AG04449 (cell line): ENCODE measurements at regions of chr17 and their contacts with region 1.

Region 1: GRCh38 chr17:19362277-19363113 is at the start of gene B9D1:
- DNase-seq: no peak
- H3K4me3 ChIP-seq: peak within 1 kb of the TSS; percentile 90
- CTCF ChIP-seq: peak; percentile 93

Region 2: GRCh38 chr17:19270689-19271611 is 91.5 kb before region 1 on chr17:
- CTCF ChIA-PET with region 1: no interaction called
- POLR2A ChIA-PET with region 1: no interaction called
- DNase-seq: no peak
- H3K4me3 ChIP-seq: no peak overlapping the region
- CTCF ChIP-seq: no peak

Region 3: GRCh38 chr17:19338031-19338990 is 24.2 kb before region 1 on chr17:
- CTCF ChIA-PET with region 1: interaction called, 15 read pairs
- POLR2A ChIA-PET with region 1: interaction called, 3 read pairs
- DNase-seq: no peak
- H3K4me3 ChIP-seq: no peak overlapping the region
- CTCF ChIP-seq: peak; percentile 50

Region 4: GRCh38 chr17:19384701-19385411 is 22.4 kb after region 1 on chr17:
- CTCF ChIA-PET with region 1: interaction called, 42 read pairs
- POLR2A ChIA-PET with region 1: interaction called, 3 read pairs
- DNase-seq: no peak
- H3K4me3 ChIP-seq: peak overlapping the region; percentile 40
- CTCF ChIP-seq: no peak

Region 5: GRCh38 chr17:19457830-19458271 is 95.4 kb after region 1 on chr17:
- CTCF ChIA-PET with region 1: interaction called, 23 read pairs
- POLR2A ChIA-PET with region 1: no interaction called
- DNase-seq: no peak
- H3K4me3 ChIP-seq: no peak overlapping the region
- CTCF ChIP-seq: no peak

Region 6: GRCh38 chr17:19766422-19767270 is 404.2 kb after region 1 on chr17:
- CTCF ChIA-PET with region 1: interaction called, 60 read pairs
- POLR2A ChIA-PET with region 1: interaction called, 3 read pairs
- DNase-seq: no peak
- H3K4me3 ChIP-seq: no peak overlapping the region
- CTCF ChIP-seq: peak; percentile 100